ENCODE measurements at regions of chr6 and their contacts with region 1.

Region 1: DNA sequence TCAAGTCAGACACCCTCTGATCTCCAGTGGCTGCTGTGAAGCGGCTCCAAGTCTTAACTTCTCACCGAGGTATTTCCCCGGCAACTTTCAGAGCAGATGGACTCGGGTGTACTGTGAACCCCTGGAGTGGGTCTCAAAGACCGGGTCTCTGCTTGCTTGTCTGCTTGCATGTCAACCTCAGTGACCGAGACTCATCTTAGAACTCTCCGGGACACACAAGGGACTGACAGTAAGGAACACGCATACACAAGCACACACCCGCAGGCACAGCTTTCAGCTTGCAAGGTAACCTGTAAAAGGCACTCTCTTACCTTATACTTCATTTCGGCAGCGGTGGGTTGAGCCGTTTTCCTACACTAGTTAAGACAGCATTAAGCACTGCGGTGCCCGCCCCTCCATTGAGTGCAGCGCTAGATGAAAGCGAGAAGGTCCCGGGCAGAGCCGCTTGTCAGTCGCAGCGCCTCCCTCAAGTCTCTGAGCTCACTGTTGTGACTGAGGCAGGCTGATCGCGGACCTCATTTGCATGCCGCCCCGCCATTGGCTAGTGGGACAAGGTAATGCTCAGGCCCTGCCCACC is at the start of gene NEDD9:
- DNase-seq: peak; percentile 91
- CTCF ChIP-seq: no peak

Region 2: DNA sequence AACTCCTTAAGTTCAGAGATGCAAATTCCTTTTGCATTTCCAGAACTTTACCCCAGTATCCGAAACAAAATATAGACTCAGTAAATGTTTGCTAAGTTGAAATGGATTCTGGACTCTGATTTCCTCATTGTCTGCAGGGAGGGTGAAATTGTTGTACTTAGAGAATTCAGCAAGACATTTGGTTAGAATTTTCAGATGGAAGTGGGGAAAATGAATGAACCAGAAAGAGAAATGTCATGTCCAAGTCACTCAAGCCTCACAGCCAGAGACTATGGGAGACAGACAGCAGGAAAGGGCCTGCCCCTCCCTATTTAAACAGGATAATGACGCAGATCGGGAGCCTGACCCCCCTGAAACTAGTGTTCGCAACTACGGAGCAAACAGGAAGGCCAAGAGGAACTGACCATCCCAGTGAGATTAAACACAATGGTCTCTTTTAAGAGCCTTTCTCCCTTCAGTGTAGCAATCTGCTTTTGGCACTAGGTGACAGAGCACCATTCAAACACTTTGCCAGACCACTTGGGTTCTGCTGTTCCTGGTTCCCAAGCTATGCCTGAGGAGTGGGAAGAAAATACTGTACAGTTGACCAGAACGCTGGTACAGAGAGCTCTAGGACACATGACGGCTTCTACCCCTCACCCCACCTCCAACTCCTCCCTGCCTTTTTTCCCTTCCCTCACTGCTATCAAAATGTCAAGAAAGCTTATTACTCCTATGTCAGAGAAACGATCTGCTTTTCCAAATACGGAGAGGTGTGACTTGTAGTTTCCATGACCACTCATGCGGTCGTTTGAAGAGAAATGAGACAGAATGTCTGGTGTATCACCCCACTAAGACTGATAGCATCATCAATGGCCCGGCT is 13.5 kb before region 1 on chr6:
- CTCF ChIA-PET with region 1: interaction called, 21 read pairs
- POLR2A ChIA-PET with region 1: interaction called, 7 read pairs
- DNase-seq: no peak
- CTCF ChIP-seq: no peak

Region 3: GRCh38 chr6:11251541-11252360 is 19.5 kb after region 1 on chr6:
- CTCF ChIA-PET with region 1: interaction called, 42 read pairs
- POLR2A ChIA-PET with region 1: no interaction called
- DNase-seq: no peak
- CTCF ChIP-seq: no peak